ENCODE measurements at regions of chr11 and their contacts with region 1.

Region 1: DNA sequence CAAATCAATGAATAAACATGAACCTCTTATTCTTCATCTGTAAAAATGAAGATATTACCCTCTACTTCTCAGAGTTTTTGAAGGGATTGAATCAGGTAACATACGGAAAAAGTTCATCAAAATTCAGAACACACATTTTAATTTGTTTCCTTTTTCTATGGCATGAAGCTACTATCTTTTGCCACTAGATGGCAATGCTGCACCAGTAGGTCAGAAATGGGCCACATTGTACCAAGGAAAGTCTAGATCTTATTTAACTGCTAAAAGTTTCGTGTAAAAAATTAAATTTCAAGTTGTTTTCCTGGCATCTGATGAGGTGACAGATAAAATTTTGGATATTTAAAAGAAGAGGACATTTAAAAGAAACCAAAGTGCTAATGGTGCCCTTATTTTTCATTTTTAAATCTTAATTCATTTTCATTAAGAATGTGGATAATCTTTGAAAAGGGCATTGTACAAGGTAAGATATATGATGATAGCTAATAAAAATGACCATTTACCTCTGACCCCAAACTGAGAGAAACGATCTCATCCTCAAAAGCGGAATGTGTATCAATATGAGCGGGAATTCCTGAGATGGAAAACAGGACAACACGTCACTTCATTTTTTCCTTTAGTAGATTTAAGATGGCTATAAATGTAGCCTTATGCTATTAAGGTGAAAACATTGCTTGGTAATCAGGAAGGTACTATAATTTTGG is 16.1 kb downstream of the ALKBH8 start:
- DNase-seq: peak; percentile 72
- H3K4me3 ChIP-seq: no peak overlapping the region
- H3K27ac ChIP-seq: no peak overlapping the region
- H3K4me1 ChIP-seq: no peaks in the 10 kb centered on the region
- H3K27me3 ChIP-seq: no peaks in the 10 kb centered on the region
- CTCF ChIP-seq: peak; percentile 96

Region 2: DNA sequence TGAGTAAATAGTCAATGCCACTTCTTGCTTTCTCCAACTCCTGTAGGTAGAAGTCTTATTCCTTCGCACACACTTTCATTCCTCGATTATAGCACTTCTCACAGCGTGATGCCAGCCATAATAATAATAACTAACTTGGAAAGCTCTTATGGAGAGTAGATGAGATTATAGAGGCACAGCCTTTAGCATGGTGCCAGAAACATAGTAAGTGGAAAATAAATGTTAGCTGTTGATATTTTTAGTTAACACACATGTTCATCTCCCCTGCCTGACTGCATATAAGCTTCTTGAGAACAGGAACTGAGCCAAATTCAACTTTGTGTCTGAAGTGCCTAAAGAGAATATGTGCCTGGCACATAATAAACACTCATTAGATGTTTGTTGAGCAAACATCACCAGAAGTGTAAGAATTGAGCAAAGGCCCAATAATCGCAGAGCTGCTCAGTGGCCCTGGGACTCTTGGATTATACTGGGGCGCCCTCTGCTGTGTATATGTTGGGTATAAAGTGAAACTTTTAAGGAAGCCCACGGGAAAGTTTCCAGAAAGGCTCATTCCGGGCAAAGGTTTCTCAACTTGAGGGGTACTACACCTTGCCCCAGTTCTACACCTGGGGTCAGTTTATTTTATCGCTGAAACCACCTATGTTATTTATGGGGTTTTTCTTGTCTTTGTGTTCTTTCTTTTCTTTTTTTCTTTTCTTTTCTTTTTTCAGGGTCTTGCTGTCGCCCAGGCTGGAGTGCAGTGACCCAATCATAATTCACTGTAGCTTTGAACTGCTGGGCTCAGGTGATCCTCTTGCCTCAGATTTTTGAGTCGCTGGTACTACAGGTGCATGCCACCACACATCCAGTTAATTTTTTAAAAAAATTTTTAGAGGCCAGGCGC is 140.2 kb after region 1 on chr11:
- CTCF ChIA-PET with region 1: interaction called, 21 read pairs
- POLR2A ChIA-PET with region 1: no interaction called
- intact Hi-C with region 1: no loop called
- DNase-seq: peak; percentile 83
- H3K4me3 ChIP-seq: no peak overlapping the region
- H3K27ac ChIP-seq: no peak overlapping the region
- H3K4me1 ChIP-seq: no peaks in the 10 kb centered on the region
- H3K27me3 ChIP-seq: no peaks in the 10 kb centered on the region
- CTCF ChIP-seq: peak; percentile 79

Region 3: DNA sequence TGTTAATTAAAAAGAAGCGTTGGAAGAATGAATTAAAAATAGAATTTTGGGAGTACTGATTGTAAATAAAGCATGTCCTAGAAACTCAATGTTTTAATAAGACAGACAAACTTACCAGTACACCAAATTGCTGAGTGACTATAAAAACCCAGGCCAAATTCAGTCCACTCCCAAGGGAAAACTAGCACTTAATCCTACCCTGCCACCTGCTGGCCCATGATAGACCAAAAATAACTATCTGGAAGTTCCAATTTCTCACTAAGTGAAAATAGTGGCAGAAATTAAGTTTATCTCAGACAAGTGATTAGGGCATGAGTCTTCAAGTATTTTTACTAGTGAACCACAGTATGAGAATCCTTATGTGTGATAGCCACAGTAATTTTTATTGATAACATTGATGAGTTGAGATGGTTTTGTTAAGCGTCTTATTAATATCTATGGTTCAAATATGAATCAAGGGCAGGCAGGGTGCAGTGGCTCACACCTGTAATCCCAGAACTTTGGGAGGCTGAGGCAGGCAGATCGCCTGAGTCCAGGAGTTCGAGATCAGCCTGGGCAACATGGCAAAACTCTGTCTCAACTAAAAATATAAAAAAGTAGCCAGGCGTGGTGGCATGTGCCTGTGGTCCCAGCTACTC is 1105.7 kb after region 1 on chr11:
- CTCF ChIA-PET with region 1: no interaction called
- POLR2A ChIA-PET with region 1: no interaction called
- intact Hi-C with region 1: loop called (anchors 10 kb)
- DNase-seq: peak; percentile 78
- H3K4me3 ChIP-seq: no peak overlapping the region
- H3K27ac ChIP-seq: no peak overlapping the region
- H3K4me1 ChIP-seq: no peaks in the 10 kb centered on the region
- H3K27me3 ChIP-seq: no peaks in the 10 kb centered on the region
- CTCF ChIP-seq: peak; percentile 66